Common myeloid progenitor, CD34-positive (primary cell): ENCODE measurements at regions of chr9 and their contacts with region 1.

Region 1: DNA sequence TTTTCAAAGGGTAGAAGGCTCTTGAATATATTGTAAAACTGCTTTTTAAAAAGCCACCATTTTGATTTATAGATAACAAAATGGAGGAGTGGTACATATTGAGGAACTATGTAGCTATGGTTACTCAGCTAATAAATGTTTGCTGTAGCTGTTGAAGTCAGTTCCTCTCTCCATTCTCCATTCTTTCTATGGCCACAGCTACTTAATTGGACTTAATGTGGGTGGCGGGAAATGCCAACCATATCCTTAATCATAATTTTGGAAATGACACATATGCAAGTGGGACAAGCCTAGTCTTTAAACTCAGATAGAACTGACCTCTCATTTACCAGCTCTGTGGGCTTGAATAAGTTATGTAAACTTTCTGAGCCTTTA is 10.6 kb downstream of the CDKN2A start:
- DNase-seq: peak in 1 of 3 donors; percentile 24
- H3K4me3 ChIP-seq: no peak overlapping the region
- H3K27ac ChIP-seq: no peak overlapping the region
- H3K4me1 ChIP-seq: no peaks in the 10 kb centered on the region
- H3K27me3 ChIP-seq: peaks cover 15 to 90% (median 52%) of the 10 kb centered on the region in 5 experiments

Region 2: GRCh38 chr9:21750021-21750735 is 233.4 kb before region 1 on chr9:
- CTCF ChIA-PET with region 1: no interaction called
- POLR2A ChIA-PET with region 1: no interaction called
- DNase-seq: no peak
- H3K4me3 ChIP-seq: no peak overlapping the region
- H3K27ac ChIP-seq: no peak overlapping the region
- H3K4me1 ChIP-seq: no peaks in the 10 kb centered on the region
- H3K27me3 ChIP-seq: no peaks in the 10 kb centered on the region

Region 3: DNA sequence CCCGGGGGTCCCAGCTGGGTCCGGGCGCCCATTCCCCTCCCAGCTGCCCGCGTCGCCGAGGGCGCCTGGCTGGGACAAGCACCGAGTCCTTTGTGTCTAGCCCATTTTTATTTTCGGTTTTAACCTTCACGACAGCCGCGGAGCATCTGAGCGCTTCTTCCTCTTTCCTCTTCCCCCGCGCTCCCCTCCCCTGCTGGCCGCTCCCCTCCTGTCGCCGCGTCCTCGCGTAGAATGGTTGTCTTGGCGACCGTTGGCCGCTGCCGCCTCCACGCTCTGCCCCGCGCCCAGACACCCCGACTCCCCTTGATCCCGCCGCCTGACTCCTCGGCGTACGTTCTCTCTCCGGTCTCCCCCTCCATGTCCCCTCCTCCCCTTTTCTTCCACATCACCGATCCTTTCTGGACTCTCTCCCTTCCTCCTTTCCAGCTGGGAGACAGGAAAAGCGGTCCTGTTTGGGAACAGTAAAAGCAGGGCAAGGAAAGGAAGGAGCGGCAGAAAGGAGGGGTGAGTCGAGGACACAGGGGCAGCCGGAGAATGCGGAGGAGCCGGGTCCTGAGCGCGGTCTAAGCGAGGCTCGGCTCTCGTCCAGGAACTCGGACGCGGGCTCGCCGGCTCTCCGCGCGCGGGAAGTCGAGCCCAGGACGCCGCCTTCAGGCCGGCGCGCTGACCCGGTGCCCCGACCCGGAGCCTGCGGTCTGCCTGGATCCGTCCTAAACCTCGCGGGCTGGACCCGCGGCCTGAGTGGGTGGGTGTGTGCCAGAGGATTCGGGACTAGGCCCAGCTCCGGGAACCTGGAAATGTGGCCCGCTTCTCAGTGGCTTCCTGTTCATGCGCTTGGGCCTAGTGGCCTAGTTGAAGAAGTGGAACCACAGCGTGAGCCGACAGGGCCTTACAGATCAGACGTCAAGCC is 11.9 kb after region 1 on chr9:
- CTCF ChIA-PET with region 1: no interaction called
- POLR2A ChIA-PET with region 1: no interaction called
- DNase-seq: peak; percentile 85 to 95 (median 94)
- H3K4me3 ChIP-seq: peak overlapping the region; percentile 57 to 91 (median 80)
- H3K27ac ChIP-seq: no peak overlapping the region
- H3K4me1 ChIP-seq: peaks cover 0 to 20% (median 19%) of the 10 kb centered on the region in 4 experiments
- H3K27me3 ChIP-seq: peaks cover 24 to 86% (median 56%) of the 10 kb centered on the region in 5 experiments

Region 4: GRCh38 chr9:22008736-22009562 is 25.4 kb after region 1 on chr9 and contains the start of gene CDKN2B:
- CTCF ChIA-PET with region 1: interaction called, 12 read pairs
- POLR2A ChIA-PET with region 1: no interaction called
- DNase-seq: no peak
- H3K4me3 ChIP-seq: peak within 1 kb of the TSS in 6 of 7 experiments; percentile 19 to 68 (median 50)
- H3K27ac ChIP-seq: no peak within 1 kb of the TSS
- H3K4me1 ChIP-seq: peaks cover 0 to 21% (median 14%) of the 10 kb centered on the region in 4 experiments
- H3K27me3 ChIP-seq: peaks cover 28 to 95% (median 53%) of the 10 kb centered on the region in 5 experiments